ENCODE measurements at regions of chr12 and their contacts with region 1.

Region 1: GRCh38 chr12:109428037-109428629 is 49.0 kb downstream of the KCTD10 start:
- DNase-seq: peak; percentile 50 to 67
- H3K4me3 ChIP-seq: no peak overlapping the region
- H3K27ac ChIP-seq: no peak overlapping the region
- H3K4me1 ChIP-seq: no peaks in the 10 kb centered on the region
- H3K27me3 ChIP-seq: peaks cover 17% of the 10 kb centered on the region; the same call in 1 of the 2 replicates
- CTCF ChIP-seq: peak; percentile 94

Region 2: GRCh38 chr12:109462710-109463692 is 34.9 kb after region 1 on chr12:
- CTCF ChIA-PET with region 1: interaction called, 12 read pairs
- POLR2A ChIA-PET with region 1: no interaction called
- intact Hi-C with region 1: loop called (anchors 2 kb)
- DNase-seq: peak; percentile 74 to 90
- H3K4me3 ChIP-seq: peak overlapping the region; percentile 31; the same call in 1 of the 2 replicates
- H3K27ac ChIP-seq: peak overlapping the region; percentile 94
- H3K4me1 ChIP-seq: peaks cover 53% of the 10 kb centered on the region
- H3K27me3 ChIP-seq: no peaks in the 10 kb centered on the region
- CTCF ChIP-seq: no peak

Region 3: DNA sequence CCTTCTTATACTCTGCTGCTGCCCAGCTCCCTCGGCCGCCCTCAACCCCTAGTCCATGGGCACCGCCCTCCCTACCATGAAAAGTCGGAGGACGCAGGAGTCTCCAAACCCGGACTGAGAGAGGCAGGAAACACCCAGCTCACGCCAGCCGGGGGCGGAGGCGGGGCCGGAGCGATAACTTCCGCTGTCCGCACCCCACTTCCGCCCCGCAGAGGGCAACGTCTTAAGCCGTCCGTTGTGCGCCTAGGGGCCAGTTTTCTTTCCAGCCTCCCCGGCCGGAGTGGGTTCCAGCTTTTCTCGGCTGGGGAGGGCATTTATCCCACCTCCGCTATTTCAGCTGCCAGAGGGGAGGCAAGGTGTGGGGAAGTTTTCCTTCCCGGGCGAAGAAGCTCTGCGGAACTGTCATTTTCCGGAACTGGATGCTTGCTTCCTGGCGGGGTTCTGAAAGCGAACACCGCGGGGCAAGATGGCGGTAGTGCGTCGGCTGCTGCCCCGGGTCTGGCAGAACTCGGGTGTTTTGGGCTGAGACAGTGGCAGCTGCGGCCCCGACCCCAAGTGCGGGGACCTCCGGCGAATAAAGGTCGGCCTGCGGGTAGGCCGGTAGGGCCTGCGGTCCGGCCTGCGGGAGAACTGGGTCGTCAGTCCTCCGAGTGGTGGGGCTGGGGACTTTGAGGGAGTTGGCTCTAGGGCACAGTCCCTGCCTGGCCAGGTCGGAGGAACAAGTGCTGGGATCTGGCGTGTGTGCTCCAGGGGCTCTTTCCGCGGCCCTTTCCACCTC is 49.2 kb after region 1 on chr12 and contains the starts of genes KCTD10 and UBE3B:
- CTCF ChIA-PET with region 1: interaction called, 10 read pairs
- POLR2A ChIA-PET with region 1: interaction called, 7 read pairs
- intact Hi-C with region 1: loop called (anchors 1 kb)
- DNase-seq: peak; percentile 74 to 85
- H3K4me3 ChIP-seq: peak within 1 kb of the TSS; percentile 90
- H3K27ac ChIP-seq: peak within 1 kb of the TSS; percentile 63
- H3K4me1 ChIP-seq: peaks cover 17% of the 10 kb centered on the region
- H3K27me3 ChIP-seq: no peaks in the 10 kb centered on the region
- CTCF ChIP-seq: no peak
- total RNA-seq, gene KCTD10: 37.4 and 45.9 TPM in 2 replicates
- total RNA-seq, gene UBE3B: 45.4 and 48.0 TPM in 2 replicates

Region 4: GRCh38 chr12:109518820-109519665 is 90.9 kb after region 1 on chr12:
- CTCF ChIA-PET with region 1: no interaction called
- POLR2A ChIA-PET with region 1: interaction called, 3 read pairs
- intact Hi-C with region 1: loop called (anchors 2 kb)
- DNase-seq: peak in 1 of 2 experiments; percentile 57
- H3K4me3 ChIP-seq: no peak overlapping the region
- H3K27ac ChIP-seq: no peak overlapping the region
- H3K4me1 ChIP-seq: no peaks in the 10 kb centered on the region
- H3K27me3 ChIP-seq: no peaks in the 10 kb centered on the region
- CTCF ChIP-seq: peak; percentile 93

Region 5: GRCh38 chr12:109775172-109775881 is 347.2 kb after region 1 on chr12:
- CTCF ChIA-PET with region 1: interaction called, 7 read pairs
- POLR2A ChIA-PET with region 1: no interaction called
- intact Hi-C with region 1: loop called (anchors 1 kb)
- DNase-seq: peak; percentile 57 to 68
- H3K4me3 ChIP-seq: no peak overlapping the region
- H3K27ac ChIP-seq: no peak overlapping the region
- H3K4me1 ChIP-seq: peaks cover 26% of the 10 kb centered on the region
- H3K27me3 ChIP-seq: no peaks in the 10 kb centered on the region
- CTCF ChIP-seq: peak; percentile 91

Region 6: DNA sequence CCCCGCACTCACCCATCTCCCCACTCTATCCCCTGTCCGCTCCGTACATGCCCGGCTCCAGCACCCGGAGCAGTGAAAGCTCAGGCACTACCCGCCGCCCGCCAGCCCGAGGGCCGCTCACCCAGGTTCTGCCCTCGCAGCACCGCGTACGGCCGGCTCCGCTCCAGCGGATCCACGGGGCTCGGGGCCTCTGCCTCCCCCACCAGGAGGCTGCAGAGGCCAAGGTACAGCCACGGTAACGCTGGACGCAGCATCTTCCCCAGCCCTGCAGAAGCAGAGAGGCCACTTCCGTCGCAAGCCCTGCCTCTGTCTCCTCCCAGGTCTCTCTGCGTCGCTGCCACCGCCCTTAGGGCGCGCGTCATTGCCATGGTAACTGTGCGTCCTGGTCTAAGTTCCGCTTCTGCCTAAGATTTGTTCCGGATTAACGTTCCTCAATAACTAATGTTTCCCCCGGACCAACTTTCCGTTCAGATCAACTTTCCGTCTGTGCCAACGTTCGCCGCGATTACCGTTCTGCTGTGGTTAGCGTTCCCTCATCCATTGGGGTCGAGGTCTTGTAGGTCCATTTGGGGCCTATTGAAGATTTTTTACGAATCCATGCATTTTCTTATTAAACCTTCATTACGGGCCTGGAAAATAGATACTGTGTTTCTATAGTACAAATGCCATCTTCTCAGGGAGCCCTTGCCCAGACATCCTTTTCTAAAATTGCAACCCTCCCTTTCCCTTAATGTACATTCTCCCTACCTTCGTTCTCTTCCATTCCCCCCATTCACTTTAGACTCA is 620.3 kb after region 1 on chr12 and contains the start of gene C12orf76:
- CTCF ChIA-PET with region 1: no interaction called
- POLR2A ChIA-PET with region 1: interaction called, 10 read pairs
- intact Hi-C with region 1: no loop called
- DNase-seq: peak; percentile 90 to 91
- H3K4me3 ChIP-seq: peak within 1 kb of the TSS; percentile 86
- H3K27ac ChIP-seq: no peak within 1 kb of the TSS
- H3K4me1 ChIP-seq: peaks cover 15% of the 10 kb centered on the region
- H3K27me3 ChIP-seq: no peaks in the 10 kb centered on the region
- CTCF ChIP-seq: no peak
- total RNA-seq, gene C12orf76: 29.2 and 29.4 TPM in 2 replicates